ENCODE measurements at regions of chr9 and their contacts with region 1.

Region 1: GRCh38 chr9:73923796-73924195 is 573.3 kb upstream of the RORB start:
- DNase-seq: no peak
- H3K4me3 ChIP-seq: no peak overlapping the region
- H3K27ac ChIP-seq: no peak overlapping the region
- H3K4me1 ChIP-seq: no peaks in the 10 kb centered on the region
- H3K27me3 ChIP-seq: no peaks in the 10 kb centered on the region
- CTCF ChIP-seq: no peak
- EP300 ChIP-seq: no peak
- POLR2A ChIP-seq: no peak

Region 2: GRCh38 chr9:73969936-73970335 is 46.1 kb after region 1 on chr9:
- intact Hi-C with region 1: loop called in 1 of 4 experiments (anchors 5 kb)
- DNase-seq: no peak
- H3K4me3 ChIP-seq: no peak overlapping the region
- H3K27ac ChIP-seq: no peak overlapping the region
- H3K4me1 ChIP-seq: no peaks in the 10 kb centered on the region
- H3K27me3 ChIP-seq: no peaks in the 10 kb centered on the region
- CTCF ChIP-seq: no peak
- EP300 ChIP-seq: no peak
- POLR2A ChIP-seq: no peak

Measured in ovary (tissue), 10 donors.